A673 (cell line): ENCODE measurements at regions of chr14 and their contacts with region 1.

Region 1: DNA sequence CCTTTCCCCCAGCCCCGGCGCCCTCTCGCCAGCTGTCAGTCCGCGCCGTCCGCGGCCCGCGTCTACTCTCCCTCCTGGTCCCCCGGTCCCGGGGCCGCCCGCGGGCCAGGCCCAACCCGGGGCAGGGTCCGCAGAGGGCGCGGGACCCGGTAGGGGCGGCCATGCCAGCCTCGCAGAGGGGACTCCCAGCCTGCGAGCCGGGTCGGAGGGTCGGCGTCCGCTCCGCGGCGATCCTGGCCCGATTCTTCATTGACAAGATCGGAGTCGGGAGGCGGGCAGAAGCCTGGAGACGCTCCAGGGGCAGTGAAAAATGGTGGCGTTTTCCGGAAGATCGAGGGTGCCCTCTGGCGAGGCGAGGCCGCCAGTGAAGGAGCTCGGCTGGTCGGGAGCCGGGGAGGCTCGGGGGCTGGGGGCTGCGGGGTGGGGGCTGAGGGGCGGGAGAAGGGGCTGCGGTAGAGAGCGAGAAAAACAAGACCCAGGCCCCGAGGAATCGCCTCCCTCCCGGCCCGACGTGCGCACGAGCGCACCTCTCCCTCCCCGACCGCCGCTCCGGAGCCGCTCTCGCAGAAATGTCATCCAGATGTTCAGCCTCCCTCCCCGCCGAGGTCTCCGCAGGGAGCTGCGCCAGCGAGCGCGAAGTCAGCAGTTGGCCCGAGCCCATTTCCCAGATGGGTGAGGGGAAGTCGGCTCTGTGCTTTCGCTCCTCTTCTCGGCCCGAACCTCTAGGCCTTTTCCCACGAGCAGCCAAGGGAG is 647 bp upstream of the TGFB3 start:
- DNase-seq: peak; percentile 89
- H3K4me3 ChIP-seq: peak overlapping the region; percentile 95
- H3K27ac ChIP-seq: peak overlapping the region; percentile 92
- H3K4me1 ChIP-seq: peaks cover 9% of the 10 kb centered on the region
- H3K27me3 ChIP-seq: no peaks in the 10 kb centered on the region
- CTCF ChIP-seq: peak; percentile 60

Region 2: DNA sequence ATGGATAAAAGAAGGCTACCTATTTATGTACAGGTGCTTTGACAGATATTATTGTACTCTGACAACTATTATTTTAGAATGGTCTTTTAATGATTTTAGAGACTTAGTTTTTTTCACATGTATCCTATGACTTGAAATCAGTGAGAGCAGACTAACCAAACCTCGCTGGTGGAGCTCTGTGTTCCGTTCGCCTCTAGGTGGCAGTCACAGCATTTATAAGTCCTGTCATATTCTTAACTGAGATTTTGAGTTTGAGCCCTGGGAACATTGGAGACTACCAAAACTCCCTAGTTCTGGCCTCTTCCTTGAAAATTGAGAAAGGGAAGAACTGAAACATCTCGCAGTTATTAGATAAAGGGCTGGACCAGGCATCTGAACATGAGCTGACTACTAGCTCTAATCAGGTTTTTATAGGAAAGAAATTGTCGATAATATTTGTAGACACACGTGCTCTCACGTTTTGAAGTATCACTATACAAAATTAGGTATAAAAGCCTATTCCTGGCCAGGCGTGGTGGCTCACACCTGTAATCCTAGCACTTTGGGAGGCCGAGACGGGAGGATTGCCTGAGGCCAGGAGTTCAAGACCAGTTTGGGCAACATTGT is 273.1 kb before region 1 on chr14:
- CTCF ChIA-PET with region 1: interaction called, 57 read pairs
- POLR2A ChIA-PET with region 1: no interaction called
- intact Hi-C with region 1: loop called (anchors 1 kb)
- DNase-seq: peak; percentile 80
- H3K4me3 ChIP-seq: no peak overlapping the region
- H3K27ac ChIP-seq: no peak overlapping the region
- H3K4me1 ChIP-seq: peaks cover 12% of the 10 kb centered on the region
- H3K27me3 ChIP-seq: no peaks in the 10 kb centered on the region
- CTCF ChIP-seq: peak; percentile 91

Region 3: GRCh38 chr14:75906676-75907280 is 75.7 kb before region 1 on chr14:
- CTCF ChIA-PET with region 1: interaction called, 22 read pairs
- POLR2A ChIA-PET with region 1: no interaction called
- intact Hi-C with region 1: loop called (anchors 5 kb)
- DNase-seq: peak; percentile 64
- H3K4me3 ChIP-seq: no peak overlapping the region
- H3K27ac ChIP-seq: no peak overlapping the region
- H3K4me1 ChIP-seq: peaks cover 10% of the 10 kb centered on the region
- H3K27me3 ChIP-seq: no peaks in the 10 kb centered on the region
- CTCF ChIP-seq: peak; percentile 93